HepG2 (cell line): ENCODE measurements at regions of chr5 and their contacts with region 1.

Region 1: GRCh38 chr5:1666812-1667588 is 132.6 kb downstream of the MRPL36 start:
- DNase-seq: no peak
- ATAC-seq: peak; percentile 47
- H3K4me3 ChIP-seq: peak overlapping the region in 1 of 3 experiments; percentile 37; a peak in 1 of 6 replicates
- H3K27ac ChIP-seq: no peak overlapping the region
- H3K4me1 ChIP-seq: peaks cover 15% of the 10 kb centered on the region
- H3K27me3 ChIP-seq: peaks cover 5 to 68% of the 10 kb centered on the region in 2 experiments; a peak in 3 of 5 replicates
- CTCF ChIP-seq: peak; percentile 75
- EP300 ChIP-seq: no peak
- POLR2A ChIP-seq: no peak
- RAD21 ChIP-seq: peak; percentile 44; the same call in 1 of the 2 replicates

Region 2: GRCh38 chr5:1385395-1386273 is 281.4 kb before region 1 on chr5:
- CTCF ChIA-PET with region 1: no interaction called
- POLR2A ChIA-PET with region 1: no interaction called
- in situ Hi-C with region 1: no loop called
- intact Hi-C with region 1: no loop called
- DNase-seq: peak; percentile 20
- ATAC-seq: peak; percentile 93
- H3K4me3 ChIP-seq: peak overlapping the region; percentile 50 to 71 (median 58)
- H3K27ac ChIP-seq: no peak overlapping the region
- H3K4me1 ChIP-seq: peaks cover 14% of the 10 kb centered on the region
- H3K27me3 ChIP-seq: peaks cover 24 to 85% of the 10 kb centered on the region in 2 experiments
- CTCF ChIP-seq: 0 out of 2 replicates have a peak, but pooled peaks have one; percentile 8
- EP300 ChIP-seq: no peak
- POLR2A ChIP-seq: no peak
- RAD21 ChIP-seq: no peak

Region 3: GRCh38 chr5:2017540-2018389 is 350.8 kb after region 1 on chr5:
- CTCF ChIA-PET with region 1: no interaction called
- POLR2A ChIA-PET with region 1: no interaction called
- in situ Hi-C with region 1: loop called (anchors 5 kb)
- intact Hi-C with region 1: no loop called
- DNase-seq: peak; percentile 8
- ATAC-seq: no peak
- H3K4me3 ChIP-seq: no peak overlapping the region
- H3K27ac ChIP-seq: no peak overlapping the region
- H3K4me1 ChIP-seq: no peaks in the 10 kb centered on the region
- H3K27me3 ChIP-seq: peaks cover 5 to 34% of the 10 kb centered on the region in 2 experiments; a peak in 4 of 5 replicates
- CTCF ChIP-seq: peak; percentile 52
- EP300 ChIP-seq: no peak
- POLR2A ChIP-seq: no peak
- RAD21 ChIP-seq: no peak